Naive thymus-derived CD4-positive, alpha-beta T cell (primary cell): ENCODE measurements at regions of chr11 and their contacts with region 1.

Region 1: GRCh38 chr11:67606492-67607201 is at the start of gene NDUFV1:
- DNase-seq: peak; percentile 90 to 96 (median 94)
- ATAC-seq: peak; percentile 100
- H3K4me3 ChIP-seq: peak within 1 kb of the TSS; percentile 97
- H3K4me3 Mint-ChIP-seq: peak within 1 kb of the TSS; percentile 85 to 99 (median 93)
- H3K27ac ChIP-seq: peak within 1 kb of the TSS; percentile 87
- H3K27ac Mint-ChIP-seq: peak within 1 kb of the TSS; percentile 78 to 96 (median 93)
- H3K4me1 ChIP-seq: peaks cover 8 to 19% of the 10 kb centered on the region in 2 donors
- H3K4me1 Mint-ChIP-seq: peaks cover 0 to 36% (median 14%) of the 10 kb centered on the region in 7 donors
- H3K27me3 ChIP-seq: no peaks in the 10 kb centered on the region
- H3K27me3 Mint-ChIP-seq: peaks cover 0 to 16% (median 10%) of the 10 kb centered on the region in 5 donors
- total RNA-seq, gene NDUFV1: 198 to 253 (median 212) TPM

Region 2: GRCh38 chr11:67468835-67469811 is 137.5 kb before region 1 on chr11 and contains the start of gene TMEM134:
- CTCF ChIA-PET with region 1: no interaction called
- POLR2A ChIA-PET with region 1: no interaction called
- intact Hi-C with region 1: loop called in 1 of 2 experiments (anchors 1 kb)
- DNase-seq: peak; percentile 82 to 95 (median 89)
- ATAC-seq: peak; percentile 92
- H3K4me3 ChIP-seq: peak within 1 kb of the TSS; percentile 74
- H3K4me3 Mint-ChIP-seq: peak within 1 kb of the TSS; percentile 87 to 95 (median 90)
- H3K27ac ChIP-seq: peak within 1 kb of the TSS; percentile 94
- H3K27ac Mint-ChIP-seq: peak within 1 kb of the TSS; percentile 79 to 97 (median 88)
- H3K4me1 ChIP-seq: peaks cover 17 to 37% of the 10 kb centered on the region in 2 donors
- H3K4me1 Mint-ChIP-seq: peaks cover 23 to 42% (median 29%) of the 10 kb centered on the region in 7 donors
- H3K27me3 ChIP-seq: no peaks in the 10 kb centered on the region
- H3K27me3 Mint-ChIP-seq: peaks cover 0 to 6% (median 0%) of the 10 kb centered on the region in 5 donors
- total RNA-seq, gene TMEM134: 52.4 to 94.6 (median 70.6) TPM

Region 3: DNA sequence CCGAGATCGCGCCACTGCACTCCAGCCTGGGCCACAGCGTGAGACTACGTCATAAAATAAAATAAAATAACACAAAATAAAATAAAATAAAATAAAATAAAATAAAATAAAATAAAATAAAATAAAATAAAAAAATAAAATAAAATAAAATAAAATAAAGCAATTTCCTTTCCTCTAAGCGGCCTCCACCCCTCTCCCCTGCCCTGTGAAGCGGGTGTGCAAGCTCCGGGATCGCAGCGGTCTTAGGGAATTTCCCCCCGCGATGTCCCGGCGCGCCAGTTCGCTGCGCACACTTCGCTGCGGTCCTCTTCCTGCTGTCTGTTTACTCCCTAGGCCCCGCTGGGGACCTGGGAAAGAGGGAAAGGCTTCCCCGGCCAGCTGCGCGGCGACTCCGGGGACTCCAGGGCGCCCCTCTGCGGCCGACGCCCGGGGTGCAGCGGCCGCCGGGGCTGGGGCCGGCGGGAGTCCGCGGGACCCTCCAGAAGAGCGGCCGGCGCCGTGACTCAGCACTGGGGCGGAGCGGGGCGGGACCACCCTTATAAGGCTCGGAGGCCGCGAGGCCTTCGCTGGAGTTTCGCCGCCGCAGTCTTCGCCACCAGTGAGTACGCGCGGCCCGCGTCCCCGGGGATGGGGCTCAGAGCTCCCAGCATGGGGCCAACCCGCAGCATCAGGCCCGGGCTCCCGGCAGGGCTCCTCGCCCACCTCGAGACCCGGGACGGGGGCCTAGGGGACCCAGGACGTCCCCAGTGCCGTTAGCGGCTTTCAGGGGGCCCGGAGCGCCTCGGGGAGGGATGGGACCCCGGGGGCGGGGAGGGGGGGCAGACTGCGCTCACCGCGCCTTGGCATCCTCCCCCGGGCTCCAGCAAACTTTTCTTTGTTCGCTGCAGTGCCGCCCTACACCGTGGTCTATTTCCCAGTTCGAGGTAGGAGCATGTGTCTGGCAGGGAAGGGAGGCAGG is 23.1 kb before region 1 on chr11 and contains the start of gene GSTP1:
- CTCF ChIA-PET with region 1: no interaction called
- POLR2A ChIA-PET with region 1: interaction called, 14 read pairs
- intact Hi-C with region 1: loop called (anchors 1 kb)
- DNase-seq: peak; percentile 51 to 86 (median 62)
- ATAC-seq: peak; percentile 86
- H3K4me3 ChIP-seq: peak within 1 kb of the TSS; percentile 69
- H3K4me3 Mint-ChIP-seq: peak within 1 kb of the TSS; percentile 79 to 98 (median 92)
- H3K27ac ChIP-seq: peak within 1 kb of the TSS; percentile 77
- H3K27ac Mint-ChIP-seq: peak within 1 kb of the TSS; percentile 78 to 93 (median 90)
- H3K4me1 ChIP-seq: peaks cover 9 to 18% of the 10 kb centered on the region in 2 donors
- H3K4me1 Mint-ChIP-seq: peaks cover 37 to 55% (median 44%) of the 10 kb centered on the region in 7 donors
- H3K27me3 ChIP-seq: no peaks in the 10 kb centered on the region
- H3K27me3 Mint-ChIP-seq: peaks cover 0 to 27% (median 0%) of the 10 kb centered on the region in 5 donors
- total RNA-seq, gene GSTP1: 77.2 to 265 (median 139) TPM

Region 4: DNA sequence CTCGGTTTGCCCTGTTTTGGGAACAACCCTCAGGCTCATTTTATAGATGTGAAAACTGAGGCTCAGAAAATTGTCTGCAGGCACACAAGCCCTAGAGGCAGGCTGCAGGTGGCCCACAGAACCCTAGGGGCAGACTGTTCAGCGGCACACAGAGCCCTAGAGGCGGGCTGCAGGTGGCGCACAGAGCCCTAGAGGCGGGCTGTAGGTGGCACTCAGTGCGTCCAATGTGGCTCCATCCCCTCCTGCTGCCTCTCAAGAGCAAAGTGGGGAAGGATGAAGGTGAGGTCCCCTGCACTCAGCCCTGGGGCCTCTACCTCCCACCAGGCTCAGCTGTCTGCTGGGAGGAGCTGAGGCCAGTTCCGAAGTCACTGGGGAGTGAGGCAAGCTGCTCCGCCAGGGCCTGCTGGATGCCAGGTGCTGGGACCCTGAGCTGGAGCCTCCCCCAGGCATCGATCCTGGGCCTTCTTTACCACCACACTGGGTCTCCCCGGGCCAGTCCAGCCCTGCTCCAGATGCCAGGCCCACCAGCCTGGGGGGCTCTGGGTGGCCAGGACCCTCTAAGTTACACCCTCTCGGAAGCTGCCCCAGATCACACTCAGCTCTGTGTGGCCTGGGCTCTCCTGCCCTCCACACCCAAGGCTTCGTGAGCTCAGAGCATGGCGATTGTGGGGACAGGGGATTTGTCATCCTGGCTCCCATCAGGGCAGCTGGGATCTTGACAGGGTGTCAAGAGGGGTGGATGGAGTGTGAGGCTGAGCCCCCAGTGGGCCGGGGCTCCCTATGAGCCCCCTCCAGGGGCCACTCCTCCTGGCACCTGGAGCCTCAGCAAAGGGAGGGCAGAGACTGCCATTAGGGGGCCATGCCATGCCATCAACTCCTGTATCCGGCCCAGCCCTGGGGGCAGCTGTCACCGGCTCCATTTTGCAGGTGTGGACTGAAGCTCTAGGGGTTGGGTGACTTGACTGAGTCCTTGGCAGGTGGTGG is 41.8 kb after region 1 on chr11:
- CTCF ChIA-PET with region 1: no interaction called
- POLR2A ChIA-PET with region 1: no interaction called
- intact Hi-C with region 1: loop called in 1 of 2 experiments (anchors 1 kb)
- DNase-seq: peak in 7 of 9 donors; percentile 48 to 69 (median 58)
- ATAC-seq: peak; percentile 89
- H3K4me3 ChIP-seq: no peak overlapping the region
- H3K4me3 Mint-ChIP-seq: peak overlapping the region in 6 of 10 donors; percentile 12 to 71 (median 40)
- H3K27ac ChIP-seq: no peak overlapping the region
- H3K27ac Mint-ChIP-seq: peak overlapping the region in 4 of 9 donors; percentile 21 to 56 (median 53)
- H3K4me1 ChIP-seq: peaks cover 23 to 38% of the 10 kb centered on the region in 2 donors
- H3K4me1 Mint-ChIP-seq: peaks cover 11 to 41% (median 35%) of the 10 kb centered on the region in 7 donors
- H3K27me3 ChIP-seq: no peaks in the 10 kb centered on the region
- H3K27me3 Mint-ChIP-seq: peaks cover 0 to 15% (median 5%) of the 10 kb centered on the region in 5 donors